Natural killer cell (primary cell): ENCODE measurements at regions of chr14 and their contacts with region 1.

Region 1: DNA sequence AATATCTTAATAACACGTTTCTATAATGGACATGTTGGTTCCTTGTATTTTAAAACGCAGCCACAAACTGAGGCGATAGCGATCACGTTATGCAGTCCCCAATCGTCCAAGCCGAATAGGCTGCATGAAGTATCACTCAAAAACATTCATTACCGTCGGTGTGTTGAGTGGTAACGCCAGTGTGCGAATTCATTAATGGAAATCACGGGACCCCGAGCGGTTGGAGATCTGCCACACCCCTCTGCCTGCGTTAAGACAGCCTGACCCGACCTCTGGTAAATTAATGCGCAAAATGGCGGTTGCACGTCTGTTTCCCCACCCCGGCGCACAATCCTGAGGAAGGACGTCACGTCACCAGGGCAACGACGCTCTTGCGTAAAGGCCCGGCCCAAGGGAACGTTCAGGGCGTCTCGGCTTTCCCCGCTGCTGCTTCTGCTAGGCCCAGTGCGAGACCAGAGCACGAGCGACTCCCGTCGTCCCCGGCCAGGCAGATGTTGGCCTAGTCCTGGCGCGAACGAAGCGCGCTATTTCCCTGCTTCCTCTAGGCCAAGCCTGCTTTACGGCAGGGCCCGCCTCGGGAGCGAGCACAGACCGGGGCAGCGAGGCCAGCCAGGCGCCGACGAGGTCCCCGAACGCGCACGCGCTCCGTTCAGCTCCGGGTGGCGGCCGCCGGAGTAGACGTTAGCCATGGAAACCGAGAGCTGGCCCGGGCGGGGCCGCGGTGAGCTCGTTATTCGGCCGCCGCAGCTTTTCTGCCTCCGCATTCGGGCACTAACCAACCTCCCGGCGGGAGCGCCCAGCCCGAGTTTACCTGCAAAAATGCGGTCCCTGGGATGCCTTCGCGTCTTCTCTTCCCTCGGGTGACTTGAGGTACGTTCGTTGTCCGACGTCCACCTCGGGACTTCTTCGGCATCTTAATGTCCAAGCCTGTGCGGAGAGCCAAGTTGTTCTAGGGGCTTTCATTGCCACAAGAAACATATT is at the start of gene PCNX4:
- DNase-seq: peak; percentile 88 to 99
- ATAC-seq: peak; percentile 82 to 95 (median 89)
- H3K4me3 ChIP-seq: peak within 1 kb of the TSS; percentile 84
- H3K4me3 Mint-ChIP-seq: peak within 1 kb of the TSS; percentile 92
- H3K27ac ChIP-seq: peak within 1 kb of the TSS; percentile 97
- H3K27ac Mint-ChIP-seq: peak within 1 kb of the TSS; percentile 94 to 96
- H3K4me1 ChIP-seq: peaks cover 19% of the 10 kb centered on the region
- H3K4me1 Mint-ChIP-seq: peaks cover 45 to 49% of the 10 kb centered on the region in 2 donors
- H3K27me3 ChIP-seq: no peaks in the 10 kb centered on the region
- H3K27me3 Mint-ChIP-seq: peaks cover 0 to 9% of the 10 kb centered on the region in 2 donors
- CTCF ChIP-seq: no peak
- total RNA-seq, gene PCNX4: 51.7 to 78.3 (median 58.3) TPM

Region 2: DNA sequence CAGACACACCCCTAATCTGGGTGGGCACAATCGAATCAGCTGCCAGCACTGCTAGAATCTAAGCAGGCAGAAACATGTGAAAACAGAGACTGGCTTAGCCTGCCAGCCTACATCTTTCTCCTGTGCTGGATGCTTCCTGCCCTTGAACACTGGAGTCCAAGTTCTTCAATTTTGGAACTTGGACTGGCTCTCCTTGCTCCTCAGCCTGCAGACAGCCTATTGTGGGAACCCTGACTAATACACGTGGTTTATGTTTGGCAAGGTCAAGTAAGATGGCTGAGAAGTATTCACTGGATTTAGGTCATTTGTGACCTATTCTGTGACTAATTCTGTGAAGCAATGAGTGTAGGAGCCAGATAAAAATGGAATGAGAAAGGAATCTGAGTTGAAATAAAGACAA is 637.7 kb before region 1 on chr14:
- intact Hi-C with region 1: no loop called
- DNase-seq: no peak
- ATAC-seq: no peak
- H3K4me3 ChIP-seq: no peak overlapping the region
- H3K4me3 Mint-ChIP-seq: no peak overlapping the region
- H3K27ac ChIP-seq: no peak overlapping the region
- H3K27ac Mint-ChIP-seq: no peak overlapping the region
- H3K4me1 ChIP-seq: no peaks in the 10 kb centered on the region
- H3K4me1 Mint-ChIP-seq: no peaks in the 10 kb centered on the region
- H3K27me3 ChIP-seq: no peaks in the 10 kb centered on the region
- H3K27me3 Mint-ChIP-seq: no peaks in the 10 kb centered on the region
- CTCF ChIP-seq: no peak

Region 3: DNA sequence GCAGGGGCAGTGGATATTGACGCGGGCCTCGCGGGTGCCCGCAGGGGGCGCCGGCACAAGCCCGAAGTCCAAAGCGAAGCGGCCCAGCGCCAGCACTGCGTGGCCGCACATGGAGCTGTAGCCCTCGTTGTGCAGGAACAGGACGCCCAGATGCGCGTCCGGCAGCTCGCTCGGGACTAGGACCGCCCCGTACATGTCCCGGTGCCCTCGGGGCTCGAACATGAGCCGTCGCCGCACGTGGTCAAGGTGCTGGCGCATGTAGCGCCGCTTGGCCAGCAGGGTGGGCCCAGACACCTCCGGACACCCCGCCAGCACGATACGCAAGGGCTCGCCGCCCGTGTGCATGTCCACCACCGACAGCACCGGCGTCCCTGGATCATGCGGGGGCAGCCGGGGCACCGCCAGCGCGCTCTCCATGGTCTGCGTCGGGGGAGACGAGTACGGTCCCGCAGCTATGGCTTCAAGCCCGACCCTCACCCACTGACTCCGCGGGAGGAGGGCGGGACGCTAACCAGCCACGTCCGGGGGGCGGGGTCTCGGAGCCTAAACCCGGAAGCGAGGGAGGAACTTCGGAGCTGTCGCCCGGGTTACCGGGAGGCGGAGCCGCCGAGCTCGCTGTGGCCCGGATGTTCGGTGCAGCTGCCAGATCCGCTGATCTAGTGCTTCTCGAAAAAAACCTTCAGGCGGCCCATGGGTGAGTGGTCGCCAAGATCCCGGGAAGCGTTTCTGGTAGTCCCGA is 607.8 kb before region 1 on chr14 and contains the starts of genes JKAMP and L3HYPDH:
- intact Hi-C with region 1: loop called (anchors 5 kb)
- DNase-seq: peak; percentile 97 to 98
- ATAC-seq: peak; percentile 93 to 96 (median 94)
- H3K4me3 ChIP-seq: peak within 1 kb of the TSS; percentile 80
- H3K4me3 Mint-ChIP-seq: peak within 1 kb of the TSS; percentile 93
- H3K27ac ChIP-seq: peak within 1 kb of the TSS; percentile 62
- H3K27ac Mint-ChIP-seq: peak within 1 kb of the TSS; percentile 86
- H3K4me1 ChIP-seq: peaks cover 24% of the 10 kb centered on the region
- H3K4me1 Mint-ChIP-seq: peaks cover 46 to 58% of the 10 kb centered on the region in 2 donors
- H3K27me3 ChIP-seq: no peaks in the 10 kb centered on the region
- H3K27me3 Mint-ChIP-seq: no peaks in the 10 kb centered on the region
- CTCF ChIP-seq: peak; percentile 38
- total RNA-seq, gene JKAMP: 18.8 to 25.0 (median 20.5) TPM
- total RNA-seq, gene L3HYPDH: 13.3 to 18.8 (median 16.5) TPM

Region 4: GRCh38 chr14:60151715-60152114 is 59.9 kb after region 1 on chr14:
- intact Hi-C with region 1: loop called (anchors 2 kb)
- DNase-seq: peak; percentile 68 to 83
- ATAC-seq: peak; percentile 92 to 98 (median 97)
- H3K4me3 ChIP-seq: no peak overlapping the region
- H3K4me3 Mint-ChIP-seq: peak overlapping the region; percentile 71
- H3K27ac ChIP-seq: peak overlapping the region; percentile 77
- H3K27ac Mint-ChIP-seq: peak overlapping the region; percentile 96 to 97
- H3K4me1 ChIP-seq: peaks cover 28% of the 10 kb centered on the region
- H3K4me1 Mint-ChIP-seq: peaks cover 52% of the 10 kb centered on the region in 2 donors
- H3K27me3 ChIP-seq: no peaks in the 10 kb centered on the region
- H3K27me3 Mint-ChIP-seq: no peaks in the 10 kb centered on the region
- CTCF ChIP-seq: no peak

Region 5: GRCh38 chr14:60164712-60165546 is 73.1 kb after region 1 on chr14 and contains the start of gene DHRS7:
- intact Hi-C with region 1: loop called (anchors 2 kb)
- DNase-seq: peak; percentile 72 to 85
- ATAC-seq: peak; percentile 80 to 95 (median 89)
- H3K4me3 ChIP-seq: peak within 1 kb of the TSS; percentile 98
- H3K4me3 Mint-ChIP-seq: peak within 1 kb of the TSS; percentile 96
- H3K27ac ChIP-seq: peak within 1 kb of the TSS; percentile 98
- H3K27ac Mint-ChIP-seq: peak within 1 kb of the TSS; percentile 98
- H3K4me1 ChIP-seq: peaks cover 37% of the 10 kb centered on the region
- H3K4me1 Mint-ChIP-seq: peaks cover 51 to 53% of the 10 kb centered on the region in 2 donors
- H3K27me3 ChIP-seq: no peaks in the 10 kb centered on the region
- H3K27me3 Mint-ChIP-seq: no peaks in the 10 kb centered on the region
- CTCF ChIP-seq: peak; percentile 11
- total RNA-seq, gene DHRS7: 115 to 139 (median 126) TPM